ENCODE measurements at regions of chr12 and their contacts with region 1.

Region 1: DNA sequence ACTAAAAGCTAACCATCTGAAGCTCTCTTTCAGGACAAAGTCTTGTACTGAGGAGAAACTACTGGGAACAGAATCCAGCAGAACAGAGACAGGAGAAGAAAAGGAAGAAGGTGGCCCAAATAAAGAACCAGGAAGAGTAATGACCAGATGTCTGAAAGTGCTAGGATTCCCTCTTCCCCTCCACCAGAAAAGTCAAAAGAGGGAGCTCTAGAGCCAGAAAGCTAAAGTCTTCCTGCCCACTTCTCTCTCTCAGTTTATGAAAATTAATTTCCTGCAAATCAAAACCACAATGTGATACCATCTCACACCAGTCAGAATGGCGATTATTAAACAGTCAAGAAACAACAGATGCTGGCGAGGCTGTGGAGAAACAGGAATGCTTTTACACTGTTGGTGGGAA is 47.2 kb downstream of the SPPL3 start:
- DNase-seq: peak; percentile 57
- H3K4me3 Mint-ChIP-seq: peak overlapping the region; percentile 8
- H3K27ac Mint-ChIP-seq: peak overlapping the region; percentile 59
- H3K4me1 Mint-ChIP-seq: peaks cover 28% of the 10 kb centered on the region
- H3K27me3 Mint-ChIP-seq: peaks cover 2% of the 10 kb centered on the region

Region 2: DNA sequence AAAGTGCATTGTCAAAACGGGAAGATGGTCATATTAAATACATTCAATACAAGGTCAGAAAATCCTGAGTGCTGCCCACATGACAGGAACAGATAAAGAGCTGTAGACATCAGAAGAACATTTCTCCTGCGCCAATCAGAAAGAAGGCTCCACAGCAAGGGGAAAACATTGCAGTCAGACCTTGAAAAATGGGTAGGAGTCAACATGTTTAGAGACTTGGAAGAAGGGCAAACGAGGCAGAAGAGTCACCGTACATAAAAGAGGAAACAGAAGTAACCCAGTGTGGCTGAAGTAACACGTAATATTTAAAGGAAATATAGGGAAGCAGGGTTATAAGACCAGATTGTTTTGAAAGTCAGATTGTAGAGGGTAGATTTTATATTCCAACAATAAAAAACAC is 35.3 kb after region 1 on chr12:
- intact Hi-C with region 1: loop called (anchors 5 kb)
- DNase-seq: no peak
- H3K4me3 Mint-ChIP-seq: no peak overlapping the region
- H3K27ac Mint-ChIP-seq: no peak overlapping the region
- H3K4me1 Mint-ChIP-seq: peaks cover 25% of the 10 kb centered on the region
- H3K27me3 Mint-ChIP-seq: no peaks in the 10 kb centered on the region

Region 3: DNA sequence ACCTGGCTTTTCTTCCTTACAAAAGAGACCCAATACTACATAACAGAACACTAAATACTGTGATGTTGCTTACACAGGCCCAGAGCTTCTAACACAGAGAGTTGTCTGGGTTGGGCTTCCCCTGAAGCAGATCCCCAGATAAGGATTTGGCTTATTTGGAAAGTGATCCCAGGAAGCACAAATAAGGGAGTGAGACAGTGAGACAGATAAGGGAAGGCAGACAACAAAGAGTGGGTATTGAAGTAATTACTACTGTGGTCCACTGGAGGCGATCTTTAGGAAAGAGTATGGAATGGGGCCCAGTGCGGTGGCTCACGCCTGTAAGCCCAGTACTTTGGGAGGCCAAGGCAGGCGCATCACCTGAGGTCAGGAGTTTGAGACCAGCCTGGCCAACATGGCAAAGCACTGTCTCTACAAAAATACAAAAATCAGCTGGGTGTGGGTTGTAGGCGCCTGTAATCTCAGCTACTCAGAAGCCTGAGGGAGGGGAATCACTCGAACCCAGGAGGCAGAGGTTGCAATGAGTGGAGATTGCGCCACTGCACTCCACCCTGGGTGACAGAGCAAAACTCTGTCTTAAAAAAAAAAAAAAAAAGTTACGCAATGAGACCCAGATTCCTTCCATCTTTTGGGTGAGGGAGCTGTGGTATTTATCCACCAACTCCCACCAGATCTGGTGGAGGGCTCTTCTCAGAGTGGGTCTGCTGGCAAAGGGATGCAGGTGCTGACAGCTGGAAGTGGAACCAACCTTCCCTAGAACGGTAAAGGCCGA is 169.5 kb after region 1 on chr12:
- intact Hi-C with region 1: no loop called
- DNase-seq: no peak
- H3K4me3 Mint-ChIP-seq: no peak overlapping the region
- H3K27ac Mint-ChIP-seq: no peak overlapping the region
- H3K4me1 Mint-ChIP-seq: peaks cover 4% of the 10 kb centered on the region
- H3K27me3 Mint-ChIP-seq: no peaks in the 10 kb centered on the region

Measured in activated CD4-positive, alpha-beta T cell treated with anti-CD3 and anti-CD28 coated beads, Interleukin-2, amount 10 ng/mL, durations not matched to agents 24 days and 14 days (primary cell).